ENCODE measurements at regions of chr6 and their contacts with region 1.

Region 1: GRCh38 chr6:149723771-149724417 is 6.0 kb upstream of the LATS1 start:
- H3K4me3 Mint-ChIP-seq: no peak overlapping the region
- H3K27ac Mint-ChIP-seq: peak overlapping the region; percentile 38
- H3K4me1 Mint-ChIP-seq: peaks cover 23% of the 10 kb centered on the region
- H3K27me3 Mint-ChIP-seq: no peaks in the 10 kb centered on the region

Region 2: DNA sequence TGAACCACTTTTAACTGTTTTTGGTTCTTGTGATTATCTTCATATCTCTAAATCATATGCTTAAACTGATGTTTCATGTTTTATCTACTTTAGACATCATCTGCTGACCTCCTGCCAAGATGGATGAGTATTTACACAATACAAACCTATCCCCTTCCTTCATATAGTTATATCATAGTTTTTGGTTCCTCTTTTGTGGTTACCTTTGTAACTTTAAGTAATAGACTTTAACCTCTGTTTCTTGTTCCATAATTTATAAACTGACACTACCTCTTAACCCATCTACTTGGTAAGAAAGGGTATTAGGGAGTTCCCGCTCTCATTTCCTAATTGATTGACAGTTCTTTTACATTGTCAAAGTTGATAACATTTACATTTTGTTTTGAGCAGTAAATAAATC is 37.5 kb after region 1 on chr6:
- intact Hi-C with region 1: loop called (anchors 5 kb)
- H3K4me3 Mint-ChIP-seq: no peak overlapping the region
- H3K27ac Mint-ChIP-seq: no peak overlapping the region
- H3K4me1 Mint-ChIP-seq: peaks cover 38% of the 10 kb centered on the region
- H3K27me3 Mint-ChIP-seq: no peaks in the 10 kb centered on the region